ENCODE measurements at regions of chr22 and their contacts with region 1.

Region 1: DNA sequence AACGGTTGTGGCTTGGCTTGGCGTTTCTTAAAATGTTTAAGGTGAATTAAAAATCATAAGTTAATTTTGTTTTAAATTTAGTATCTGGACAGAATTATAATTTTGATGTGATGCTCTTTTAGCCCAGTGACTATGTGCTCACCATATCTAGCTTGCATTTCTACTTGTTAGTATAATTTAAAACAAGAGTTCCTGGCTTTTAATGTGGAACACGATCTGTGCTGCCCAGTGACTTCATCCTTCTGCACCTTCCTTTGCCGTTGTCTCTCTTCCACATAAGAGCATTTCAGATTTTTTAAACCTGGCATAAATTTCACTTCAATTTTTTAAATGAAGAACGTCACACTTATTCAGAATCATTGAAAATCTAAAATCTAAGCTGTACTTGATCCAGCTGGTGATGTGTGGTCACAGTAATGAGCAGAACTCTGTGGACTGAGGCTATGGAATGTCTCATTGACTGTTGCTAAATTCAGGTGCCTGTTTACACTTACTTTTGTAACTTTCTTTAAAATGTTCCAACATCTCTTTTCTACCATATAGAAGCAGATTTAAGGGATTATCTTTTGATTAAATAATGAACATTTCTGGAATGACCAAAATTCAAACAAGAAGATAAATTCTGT is 75.4 kb upstream of the ADSL start:
- DNase-seq: no peak
- ATAC-seq: no peak

Region 2: DNA sequence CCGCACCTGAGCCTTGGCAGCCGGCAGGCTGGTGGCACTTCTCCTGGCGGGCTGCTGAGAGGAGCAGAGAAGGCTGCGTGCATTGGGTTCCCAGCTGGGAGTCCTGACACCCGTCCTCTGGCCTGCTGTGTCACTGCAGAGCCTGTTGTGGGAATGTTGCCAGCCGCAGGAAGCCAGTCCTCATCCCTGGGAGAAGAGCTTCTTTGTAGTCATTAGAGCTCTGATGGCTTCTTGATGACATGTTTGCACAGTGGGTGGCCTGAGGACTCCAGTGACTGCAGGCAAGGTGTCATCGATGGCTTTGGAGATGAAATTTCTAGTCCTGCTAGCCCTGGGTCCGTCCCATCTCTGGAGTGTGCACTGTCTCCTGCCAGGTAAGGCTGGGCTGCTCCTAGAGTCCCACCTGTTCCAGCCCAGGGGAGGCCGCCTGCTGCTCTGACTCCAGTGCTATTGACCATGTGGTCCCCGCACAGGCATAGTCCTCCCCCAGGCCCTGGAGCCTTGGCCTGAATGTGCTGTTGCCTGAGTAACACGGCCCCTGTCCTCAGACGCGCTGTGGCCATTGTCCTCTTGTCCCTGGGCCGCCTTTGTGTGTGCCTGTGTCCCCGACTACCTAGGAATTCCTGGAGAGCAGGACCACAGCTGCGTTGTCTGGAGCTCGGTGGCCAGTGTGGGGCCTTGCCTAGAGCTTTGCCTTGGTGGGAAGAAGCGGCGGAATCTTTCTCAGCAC is 571.1 kb before region 1 on chr22:
- intact Hi-C with region 1: no loop called
- DNase-seq: peak; percentile 54
- ATAC-seq: no peak

Region 3: DNA sequence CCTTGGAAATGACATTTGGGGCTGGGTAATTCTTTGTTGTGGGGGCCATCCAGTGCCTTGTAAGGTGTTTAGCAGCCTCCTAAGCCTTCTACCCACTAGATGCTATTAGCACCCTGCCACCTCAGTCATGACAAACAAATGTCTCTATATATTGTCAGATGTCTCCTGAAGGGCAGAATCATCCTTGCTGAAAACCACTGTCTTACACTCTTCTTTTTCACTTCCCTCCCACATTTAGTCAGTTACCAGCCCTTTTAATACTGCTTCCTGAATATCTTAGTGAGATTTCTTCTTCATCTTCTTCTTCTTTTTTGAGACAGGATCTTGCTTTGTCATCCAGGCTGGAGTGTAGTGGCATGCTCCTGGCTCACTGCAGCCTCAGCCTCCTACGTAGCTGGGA is 60.0 kb before region 1 on chr22:
- intact Hi-C with region 1: loop called (anchors 5 kb)
- DNase-seq: no peak
- ATAC-seq: no peak

Region 4: GRCh38 chr22:40346178-40347118 is 75.6 kb after region 1 on chr22 and contains the start of gene ADSL:
- intact Hi-C with region 1: no loop called
- DNase-seq: peak; percentile 94
- ATAC-seq: peak; percentile 98
- total RNA-seq, gene ADSL: 55.3 TPM

Measured in Right ventricle myocardium inferior (tissue), 1 donor.